GM18951 (cell line): ENCODE measurements at regions of chr7 and their contacts with region 1.

Region 1: GRCh38 chr7:4753711-4754432 is 21.6 kb upstream of the AP5Z1 start:
- POLR2A ChIP-seq: no peak

Region 2: GRCh38 chr7:4610768-4611467 is 143.0 kb before region 1 on chr7:
- in situ Hi-C with region 1: loop called (anchors 5 kb)
- POLR2A ChIP-seq: no peak